HEK293T (cell line): ENCODE measurements at regions of chr5 and their contacts with region 1.

Region 1: GRCh38 chr5:125835293-125836172 is 587.7 kb upstream of the GRAMD2B start:
- DNase-seq: peak; percentile 67

Region 2: DNA sequence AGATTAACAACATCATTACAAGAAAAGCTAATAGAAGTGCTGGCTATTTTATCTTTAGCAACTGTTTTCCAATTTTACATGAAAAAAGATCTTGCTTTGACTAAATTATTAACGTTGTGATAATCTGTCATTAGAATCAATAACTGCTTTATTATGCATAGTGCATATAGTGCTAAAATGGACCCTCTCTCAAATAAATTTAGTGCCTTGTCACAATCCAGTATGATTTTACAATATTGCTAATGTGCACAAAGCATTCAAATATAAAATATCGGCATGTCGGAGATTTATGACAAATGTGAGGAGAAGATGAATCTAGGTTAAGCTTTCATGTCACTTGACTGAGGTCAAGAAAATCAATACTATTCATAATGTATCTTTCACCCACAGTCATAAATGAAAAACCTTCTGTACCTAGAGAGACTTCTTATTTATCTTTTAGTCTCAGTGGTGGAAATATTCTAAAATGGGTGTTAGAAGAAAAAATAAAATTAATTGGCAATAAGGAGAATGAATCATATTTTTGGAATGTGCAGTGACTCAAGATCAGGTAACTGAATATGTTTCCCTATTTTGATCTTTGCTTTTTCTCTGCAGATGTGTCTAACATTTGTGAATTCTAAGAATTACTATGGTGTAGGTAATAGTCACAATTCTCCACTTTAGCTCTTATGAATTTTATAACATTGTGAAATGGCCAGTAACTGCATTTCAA is 85.2 kb before region 1 on chr5:
- CTCF ChIA-PET with region 1: no interaction called
- POLR2A ChIA-PET with region 1: no interaction called
- DNase-seq: no peak

Region 3: GRCh38 chr5:125786021-125786420 is 49.5 kb before region 1 on chr5:
- CTCF ChIA-PET with region 1: no interaction called
- POLR2A ChIA-PET with region 1: no interaction called
- DNase-seq: no peak

Region 4: DNA sequence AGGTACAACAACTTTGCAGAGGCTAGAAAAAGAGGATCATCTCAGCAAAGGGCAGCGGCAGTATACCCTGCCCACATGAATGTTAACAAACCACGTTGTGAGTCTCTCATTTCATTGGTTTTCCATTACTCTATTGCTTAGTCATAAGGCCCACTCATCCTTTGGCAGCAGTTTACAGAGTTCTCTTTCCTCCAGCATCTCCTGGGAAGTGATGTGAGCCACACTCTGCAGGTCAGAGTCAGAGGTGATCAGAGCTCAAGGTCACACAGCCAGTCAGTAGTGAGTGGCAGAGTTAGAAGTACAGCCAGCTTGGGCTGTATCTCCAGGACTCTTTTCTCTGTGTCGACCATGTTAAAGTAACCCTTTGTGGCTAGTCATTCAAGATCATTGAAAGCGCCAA is 12.0 kb before region 1 on chr5:
- CTCF ChIA-PET with region 1: interaction called, 10 read pairs
- POLR2A ChIA-PET with region 1: no interaction called
- DNase-seq: no peak

Region 5: GRCh38 chr5:125874717-125875116 is 39.2 kb after region 1 on chr5:
- CTCF ChIA-PET with region 1: no interaction called
- POLR2A ChIA-PET with region 1: no interaction called
- DNase-seq: peak; percentile 18